Left ventricle myocardium inferior (tissue), 1 donor: ENCODE measurements at regions of chr22 and their contacts with region 1.

Region 1: DNA sequence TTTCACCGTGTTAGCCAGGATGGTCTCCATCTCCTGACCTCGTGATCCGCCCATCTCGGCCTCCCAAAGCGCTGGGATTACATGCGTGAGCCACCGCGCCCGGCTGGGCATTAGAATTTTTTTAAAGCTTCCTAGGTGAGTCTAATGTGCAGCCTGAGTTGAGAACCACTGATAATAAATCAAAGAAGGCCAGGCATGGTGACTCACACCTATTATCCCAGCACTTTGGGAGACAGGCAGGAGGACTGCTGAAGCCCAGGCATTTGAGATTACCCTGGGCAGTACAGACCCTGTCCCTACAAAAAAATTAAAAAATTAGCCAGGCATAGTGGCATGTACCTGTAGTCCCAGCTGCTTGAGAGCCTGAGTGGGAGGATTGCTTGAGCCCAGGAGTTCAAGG is 13.7 kb downstream of the MEI1 start:
- DNase-seq: no peak
- H3K4me3 ChIP-seq: no peak overlapping the region
- H3K27ac ChIP-seq: no peak overlapping the region
- H3K4me1 ChIP-seq: no peaks in the 10 kb centered on the region
- H3K27me3 ChIP-seq: no peaks in the 10 kb centered on the region
- CTCF ChIP-seq: no peak

Region 2: GRCh38 chr22:41636467-41636866 is 76.5 kb before region 1 on chr22:
- intact Hi-C with region 1: no loop called
- DNase-seq: peak; percentile 30
- H3K4me3 ChIP-seq: no peak overlapping the region
- H3K27ac ChIP-seq: peak overlapping the region; percentile 73
- H3K4me1 ChIP-seq: peaks cover 52% of the 10 kb centered on the region
- H3K27me3 ChIP-seq: no peaks in the 10 kb centered on the region
- CTCF ChIP-seq: no peak

Region 3: GRCh38 chr22:41772645-41773044 is 59.6 kb after region 1 on chr22:
- intact Hi-C with region 1: loop called (anchors 10 kb)
- DNase-seq: no peak
- H3K4me3 ChIP-seq: no peak overlapping the region
- H3K27ac ChIP-seq: no peak overlapping the region
- H3K4me1 ChIP-seq: no peaks in the 10 kb centered on the region
- H3K27me3 ChIP-seq: no peaks in the 10 kb centered on the region
- CTCF ChIP-seq: no peak